Mammary epithelial cell (primary cell): ENCODE measurements at regions of chr6 and their contacts with region 1.

Region 1: DNA sequence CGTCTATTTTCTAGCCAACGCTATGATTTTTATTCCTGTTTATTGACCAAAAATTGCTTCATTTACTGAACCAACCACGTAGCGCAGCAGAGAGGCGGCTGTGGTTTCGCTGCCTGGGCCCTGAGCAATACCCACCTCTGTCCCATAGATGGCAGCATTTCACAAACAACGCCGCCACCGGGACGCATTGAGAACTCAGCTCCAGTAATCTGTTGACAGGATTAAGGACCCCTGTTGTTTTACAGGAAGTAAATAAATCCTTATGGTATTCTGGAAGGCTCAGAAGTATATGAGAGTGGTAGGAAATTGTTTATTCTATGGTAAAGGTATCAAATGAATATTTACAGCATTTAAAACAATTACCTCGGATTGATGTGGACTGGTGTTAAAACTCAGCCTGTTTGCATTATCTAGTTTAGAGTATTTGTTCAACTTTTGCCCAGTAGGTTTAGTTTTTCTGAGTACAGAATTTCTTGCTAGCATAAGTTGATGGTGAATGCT is 547.9 kb upstream of the SLC35B3 start:
- DNase-seq: peak; percentile 47
- H3K4me3 ChIP-seq: no peak overlapping the region
- H3K27ac ChIP-seq: no peak overlapping the region
- H3K4me1 ChIP-seq: no peaks in the 10 kb centered on the region
- H3K27me3 ChIP-seq: no peaks in the 10 kb centered on the region
- CTCF ChIP-seq: peak; percentile 96 to 97

Region 2: GRCh38 chr6:8539446-8539845 is 443.8 kb before region 1 on chr6:
- CTCF ChIA-PET with region 1: no interaction called
- dilution Hi-C with region 1: no loop called
- in situ Hi-C with region 1: no loop called
- intact Hi-C with region 1: loop called (anchors 1 kb)
- DNase-seq: peak; percentile 33
- H3K4me3 ChIP-seq: no peak overlapping the region
- H3K27ac ChIP-seq: no peak overlapping the region
- H3K4me1 ChIP-seq: no peaks in the 10 kb centered on the region
- H3K27me3 ChIP-seq: no peaks in the 10 kb centered on the region
- CTCF ChIP-seq: peak; percentile 24 to 51

Region 3: DNA sequence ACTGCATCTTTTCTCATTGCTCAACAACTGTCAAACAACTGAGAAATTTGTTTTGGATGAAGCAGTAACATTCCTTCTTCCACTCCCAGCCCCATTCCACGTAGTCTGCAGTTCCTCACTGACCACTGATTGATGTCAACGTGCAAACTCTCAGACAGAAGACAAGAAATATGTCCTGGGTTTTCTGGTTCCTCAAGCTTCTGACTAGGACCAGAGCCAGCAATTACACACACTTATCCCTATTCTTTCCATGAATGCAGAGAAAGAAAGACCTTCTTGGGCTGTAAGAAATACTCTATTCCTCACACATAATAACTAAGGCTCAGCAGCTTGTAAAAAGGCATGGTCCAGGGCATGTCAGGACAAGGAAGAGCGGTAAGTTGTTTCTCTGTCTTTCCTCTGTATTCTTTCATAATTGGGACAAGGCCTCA is 242.2 kb after region 1 on chr6:
- CTCF ChIA-PET with region 1: interaction called, 18 read pairs
- dilution Hi-C with region 1: no loop called
- in situ Hi-C with region 1: no loop called
- intact Hi-C with region 1: no loop called
- DNase-seq: peak; percentile 51
- H3K4me3 ChIP-seq: no peak overlapping the region
- H3K27ac ChIP-seq: no peak overlapping the region
- H3K4me1 ChIP-seq: peaks cover 10% of the 10 kb centered on the region
- H3K27me3 ChIP-seq: no peaks in the 10 kb centered on the region
- CTCF ChIP-seq: no peak

Region 4: GRCh38 chr6:9412951-9413559 is 429.8 kb after region 1 on chr6:
- CTCF ChIA-PET with region 1: no interaction called
- dilution Hi-C with region 1: no loop called
- in situ Hi-C with region 1: no loop called
- intact Hi-C with region 1: loop called (anchors 1 kb)
- DNase-seq: peak; percentile 19
- H3K4me3 ChIP-seq: no peak overlapping the region
- H3K27ac ChIP-seq: no peak overlapping the region
- H3K4me1 ChIP-seq: no peaks in the 10 kb centered on the region
- H3K27me3 ChIP-seq: no peaks in the 10 kb centered on the region
- CTCF ChIP-seq: peak; percentile 69 to 72

Region 5: DNA sequence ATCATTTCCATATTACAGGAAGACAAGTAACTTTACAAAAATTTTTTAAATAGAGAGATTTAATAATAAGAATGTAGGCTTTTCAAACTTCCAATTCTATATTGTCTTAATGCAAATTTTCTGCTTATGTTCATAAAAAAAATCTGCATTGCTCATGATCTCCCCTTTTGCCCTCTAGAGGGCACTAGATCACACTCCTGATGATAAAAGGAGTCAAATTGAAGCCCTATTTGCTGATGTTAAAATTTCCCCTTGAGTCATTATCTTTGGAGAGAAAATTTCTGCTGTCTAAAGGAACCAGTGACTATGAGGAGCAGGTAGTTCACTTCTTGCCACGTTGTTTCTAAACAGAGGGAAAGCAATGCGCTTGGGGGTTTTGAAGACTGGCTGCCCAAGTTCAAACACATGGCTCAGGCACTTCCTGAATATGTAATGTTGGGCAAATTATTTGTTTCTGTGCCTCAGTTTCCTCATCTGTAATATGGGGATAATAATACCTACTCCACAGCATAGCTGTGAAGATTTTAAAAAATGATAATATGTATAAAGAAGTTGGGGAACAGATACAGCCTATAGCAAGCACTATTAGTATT is 557.4 kb after region 1 on chr6:
- CTCF ChIA-PET with region 1: no interaction called
- dilution Hi-C with region 1: no loop called
- in situ Hi-C with region 1: loop called in 1 of 2 experiments (anchors 25 kb)
- intact Hi-C with region 1: loop called (anchors 1 kb)
- DNase-seq: peak; percentile 72
- H3K4me3 ChIP-seq: no peak overlapping the region
- H3K27ac ChIP-seq: no peak overlapping the region
- H3K4me1 ChIP-seq: no peaks in the 10 kb centered on the region
- H3K27me3 ChIP-seq: no peaks in the 10 kb centered on the region
- CTCF ChIP-seq: peak; percentile 74 to 80

Region 6: DNA sequence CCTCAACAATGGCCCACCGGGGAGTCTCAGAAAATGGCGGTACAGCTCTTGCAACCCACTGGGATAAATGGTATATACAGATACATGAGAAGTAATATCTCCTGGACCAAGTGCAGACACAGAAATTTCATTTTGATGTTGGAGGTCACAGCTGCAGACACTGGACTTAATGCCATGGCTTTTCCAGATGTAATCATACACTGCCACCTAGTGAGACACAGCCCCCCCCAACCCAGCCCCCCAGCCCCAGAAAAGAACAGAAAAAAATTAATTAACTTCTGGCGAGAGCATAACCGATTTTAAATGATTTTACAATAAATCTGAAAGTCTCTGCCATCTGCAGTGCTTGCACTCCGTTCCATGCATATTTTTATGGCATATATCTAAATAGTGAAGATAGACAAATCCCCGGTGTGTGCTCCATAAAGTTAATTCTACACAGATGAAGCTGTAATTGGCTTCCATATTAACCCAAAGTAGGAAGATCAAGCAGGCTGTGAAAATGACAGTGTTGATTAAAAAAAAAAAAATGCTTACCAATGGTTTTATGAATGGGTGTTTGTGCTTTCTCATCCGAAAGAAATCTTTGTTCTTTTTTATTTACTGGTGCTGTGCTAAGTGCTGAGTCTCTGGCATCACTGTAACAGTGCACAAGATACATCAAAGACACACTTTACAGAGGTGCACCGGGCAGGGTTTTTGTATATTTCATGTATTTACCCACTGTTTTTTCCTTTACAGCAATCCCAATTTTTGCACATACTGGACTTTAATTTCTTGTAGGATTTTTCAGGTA is 627.6 kb after region 1 on chr6:
- CTCF ChIA-PET with region 1: no interaction called
- dilution Hi-C with region 1: no loop called
- in situ Hi-C with region 1: no loop called
- intact Hi-C with region 1: loop called (anchors 5 kb)
- DNase-seq: no peak
- H3K4me3 ChIP-seq: no peak overlapping the region
- H3K27ac ChIP-seq: no peak overlapping the region
- H3K4me1 ChIP-seq: peaks cover 6% of the 10 kb centered on the region
- H3K27me3 ChIP-seq: no peaks in the 10 kb centered on the region
- CTCF ChIP-seq: peak in 1 of 2 donors; percentile 1

Region 7: DNA sequence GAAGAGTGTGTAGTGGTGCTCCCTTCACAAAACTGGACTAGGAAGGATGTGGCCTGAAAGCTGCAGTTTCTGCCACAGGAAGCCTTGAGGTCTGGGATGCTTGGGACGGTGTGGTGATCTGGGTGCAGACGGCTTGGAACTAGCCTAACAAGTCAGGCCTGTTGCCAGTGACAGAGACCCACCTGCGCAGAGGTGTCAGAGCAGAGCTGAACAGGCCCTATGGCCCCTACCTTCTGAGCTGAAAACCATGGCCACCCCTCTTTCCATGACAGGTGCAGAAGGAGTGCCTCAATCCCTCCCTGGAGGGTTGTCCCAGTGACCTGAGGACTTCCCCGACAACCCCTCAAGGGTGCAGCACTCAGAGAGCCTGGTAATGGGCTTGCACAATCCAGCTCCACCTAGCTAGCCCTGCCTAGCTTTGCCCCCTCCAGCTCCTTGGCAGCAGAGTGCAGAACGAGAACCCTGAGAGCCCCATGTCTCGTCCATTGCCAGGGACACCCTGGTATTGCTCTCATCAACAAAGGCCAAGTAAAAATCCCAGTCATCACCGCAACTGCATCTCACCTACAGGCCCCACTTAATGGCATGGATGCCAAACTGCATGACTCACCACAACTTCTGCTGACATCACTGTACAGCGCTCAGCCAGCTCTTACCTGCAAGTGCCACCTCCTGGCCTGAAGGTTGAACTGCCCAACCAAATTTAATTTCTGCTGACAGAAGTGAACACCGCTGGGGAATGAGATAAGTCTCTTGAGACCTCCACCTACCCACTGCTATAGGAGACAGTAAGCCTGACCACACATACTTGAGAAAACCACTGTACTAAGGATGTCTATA is 868.5 kb after region 1 on chr6:
- CTCF ChIA-PET with region 1: no interaction called
- dilution Hi-C with region 1: no loop called
- in situ Hi-C with region 1: no loop called
- intact Hi-C with region 1: loop called (anchors 5 kb)
- DNase-seq: peak; percentile 76
- H3K4me3 ChIP-seq: no peak overlapping the region
- H3K27ac ChIP-seq: peak overlapping the region; percentile 20
- H3K4me1 ChIP-seq: peaks cover 9% of the 10 kb centered on the region
- H3K27me3 ChIP-seq: no peaks in the 10 kb centered on the region
- CTCF ChIP-seq: peak; percentile 66 to 69